ENCODE measurements at regions of chr2 and their contacts with region 1.

Region 1: DNA sequence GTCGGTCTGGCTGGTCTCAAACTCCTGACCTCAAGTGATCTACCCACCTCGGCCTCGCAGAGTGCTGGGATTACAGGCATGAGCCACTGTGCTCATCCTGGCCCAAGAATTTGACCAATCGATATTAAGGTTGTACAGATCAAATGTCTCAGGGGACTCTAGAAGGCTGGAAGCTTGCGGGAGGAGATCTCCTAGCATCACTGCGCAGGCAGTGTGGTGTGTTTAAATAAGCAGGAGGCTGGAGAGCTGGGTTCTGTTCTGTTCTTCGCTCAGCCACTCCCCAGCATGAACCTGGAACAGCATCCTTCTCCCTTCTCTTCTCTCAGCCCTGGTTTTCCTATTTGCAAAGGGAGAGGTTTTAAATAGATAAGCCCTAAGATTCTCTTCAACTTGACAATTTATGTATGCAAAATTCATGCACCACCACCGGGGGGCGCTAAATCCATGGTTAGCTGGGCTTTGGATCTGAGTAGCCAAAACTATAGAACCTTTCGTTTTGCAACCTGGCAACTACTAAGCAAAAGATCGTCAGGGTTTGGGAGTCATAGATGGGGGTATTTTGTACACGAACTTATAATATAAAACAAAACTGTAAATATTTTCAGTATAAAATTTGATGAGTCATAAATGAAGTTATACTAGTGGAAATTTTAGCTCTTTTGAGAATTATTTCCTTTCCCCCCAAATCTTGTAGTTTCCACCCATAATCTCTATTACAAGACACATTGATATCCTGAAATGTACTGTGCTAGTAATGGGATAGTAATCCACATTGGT is 60.6 kb downstream of the SLC16A14 start:
- DNase-seq: peak; percentile 17 to 66
- ATAC-seq: peak; percentile 82 to 88; a peak in 4 of 6 replicates
- H3K4me3 ChIP-seq: no peak overlapping the region
- H3K27ac ChIP-seq: no peak overlapping the region
- H3K4me1 ChIP-seq: no peaks in the 10 kb centered on the region; the same call in 2 of the 3 replicates
- CTCF ChIP-seq: peak; percentile 90
- EP300 ChIP-seq: no peak
- POLR2A ChIP-seq: no peak
- RAD21 ChIP-seq: peak; percentile 86

Region 2: GRCh38 chr2:230018153-230018552 is 10.0 kb after region 1 on chr2:
- CTCF ChIA-PET with region 1: interaction called, 21 read pairs
- POLR2A ChIA-PET with region 1: no interaction called
- DNase-seq: peak in 1 of 2 experiments; percentile 18
- ATAC-seq: peak; percentile 36 to 68; a peak in 3 of 6 replicates
- H3K4me3 ChIP-seq: no peak overlapping the region
- H3K27ac ChIP-seq: no peak overlapping the region
- H3K4me1 ChIP-seq: no peaks in the 10 kb centered on the region
- CTCF ChIP-seq: no peak
- EP300 ChIP-seq: no peak
- POLR2A ChIP-seq: no peak
- RAD21 ChIP-seq: no peak

Region 3: DNA sequence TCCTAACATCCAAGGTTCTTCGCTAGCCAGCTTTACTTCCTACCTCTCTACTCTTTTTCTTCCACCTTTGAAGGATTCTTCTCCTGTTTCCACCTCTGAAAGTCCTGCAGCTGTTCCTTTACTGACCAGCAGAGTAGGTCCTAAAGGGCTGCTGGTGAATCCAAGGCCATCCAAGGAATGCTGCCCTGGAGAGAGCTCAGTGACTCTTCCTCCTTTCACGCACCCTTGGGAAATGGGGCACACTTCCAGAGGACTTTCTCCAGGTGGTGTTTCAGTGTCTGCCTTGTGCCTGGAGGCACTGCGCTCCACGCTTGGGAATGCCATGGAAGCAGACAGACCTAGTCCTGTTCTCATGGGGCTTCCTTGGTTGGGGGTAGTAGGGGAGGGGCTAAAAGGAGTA is 15.2 kb after region 1 on chr2:
- CTCF ChIA-PET with region 1: interaction called, 21 read pairs
- POLR2A ChIA-PET with region 1: no interaction called
- DNase-seq: no peak
- ATAC-seq: peak; percentile 55 to 59; a peak in 4 of 6 replicates
- H3K4me3 ChIP-seq: no peak overlapping the region
- H3K27ac ChIP-seq: no peak overlapping the region
- H3K4me1 ChIP-seq: no peaks in the 10 kb centered on the region
- CTCF ChIP-seq: no peak
- EP300 ChIP-seq: no peak
- POLR2A ChIP-seq: no peak
- RAD21 ChIP-seq: no peak

Region 4: DNA sequence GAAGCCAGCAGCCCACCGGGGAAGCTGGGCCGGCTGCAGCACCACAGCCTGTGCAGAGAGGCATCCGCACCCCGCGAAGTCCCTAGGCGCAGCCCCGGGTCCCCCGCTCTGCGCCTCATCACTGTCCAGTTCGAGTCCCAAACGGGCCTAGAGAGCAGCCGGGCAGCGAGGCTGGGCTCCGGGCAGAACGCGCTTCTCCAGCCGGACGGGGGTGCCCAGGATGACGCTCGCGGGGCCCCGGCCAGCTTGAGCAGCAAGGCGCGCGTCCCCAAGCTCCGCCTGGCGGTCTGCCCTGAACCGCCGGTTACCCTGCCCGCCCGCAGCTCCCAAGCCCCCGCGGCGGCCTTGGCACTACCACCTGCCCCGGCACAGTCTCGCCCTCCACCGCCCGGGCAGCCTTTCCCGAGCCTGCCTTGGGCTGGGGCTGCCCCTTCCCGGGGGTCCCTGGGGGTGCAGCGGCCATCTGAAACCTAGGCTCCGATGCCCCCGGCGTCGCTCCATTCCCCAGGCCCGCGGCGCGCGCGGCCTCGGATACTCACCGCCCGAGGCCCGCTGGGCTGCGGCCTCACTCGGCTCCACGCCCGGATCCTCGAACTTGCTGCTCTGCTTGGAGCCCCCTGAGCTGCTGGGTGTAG is 60.0 kb after region 1 on chr2:
- CTCF ChIA-PET with region 1: interaction called, 41 read pairs
- POLR2A ChIA-PET with region 1: no interaction called
- DNase-seq: peak; percentile 7 to 51
- ATAC-seq: peak; percentile 72 to 77
- H3K4me3 ChIP-seq: peak overlapping the region; percentile 51
- H3K27ac ChIP-seq: peak overlapping the region; percentile 44 to 70; a peak in 5 of 6 replicates
- H3K4me1 ChIP-seq: no peaks in the 10 kb centered on the region
- CTCF ChIP-seq: no peak; the same call in 2 of the 3 replicates
- EP300 ChIP-seq: no peak
- POLR2A ChIP-seq: no peak
- RAD21 ChIP-seq: no peak

Region 5: DNA sequence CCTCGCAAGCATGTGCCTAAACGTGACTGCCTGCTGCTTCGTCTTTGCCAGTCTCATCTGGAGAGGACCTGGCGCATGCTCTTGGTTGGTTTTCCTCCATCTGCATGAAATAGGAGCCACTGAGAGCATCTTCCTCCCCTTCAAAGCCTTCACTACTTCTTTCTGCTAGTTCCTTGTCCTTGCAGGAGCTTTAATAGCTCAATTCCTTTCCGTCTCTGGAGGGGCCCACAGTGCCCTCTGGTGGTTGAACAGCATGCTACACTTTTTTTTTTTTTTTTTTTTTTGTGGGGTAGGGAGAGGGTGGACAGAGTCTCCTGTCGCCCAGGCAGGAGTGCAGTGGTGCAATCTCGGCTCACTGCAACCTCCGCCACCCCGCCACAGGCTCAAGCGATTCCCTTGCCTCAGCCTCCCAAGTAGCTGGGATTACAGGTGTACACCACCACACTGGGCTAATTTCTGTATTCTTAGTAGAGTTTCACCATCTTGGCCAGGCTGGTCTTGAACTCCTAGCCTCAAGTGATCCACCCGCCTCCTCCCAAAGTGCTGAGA is 152.1 kb after region 1 on chr2:
- CTCF ChIA-PET with region 1: interaction called, 98 read pairs
- POLR2A ChIA-PET with region 1: no interaction called
- DNase-seq: peak; percentile 47 to 48
- ATAC-seq: peak; percentile 48 to 88; a peak in 4 of 6 replicates
- H3K4me3 ChIP-seq: no peak overlapping the region
- H3K27ac ChIP-seq: no peak overlapping the region
- H3K4me1 ChIP-seq: no peaks in the 10 kb centered on the region
- CTCF ChIP-seq: peak; percentile 75
- EP300 ChIP-seq: no peak
- POLR2A ChIP-seq: no peak
- RAD21 ChIP-seq: peak; percentile 65 to 71

Region 6: DNA sequence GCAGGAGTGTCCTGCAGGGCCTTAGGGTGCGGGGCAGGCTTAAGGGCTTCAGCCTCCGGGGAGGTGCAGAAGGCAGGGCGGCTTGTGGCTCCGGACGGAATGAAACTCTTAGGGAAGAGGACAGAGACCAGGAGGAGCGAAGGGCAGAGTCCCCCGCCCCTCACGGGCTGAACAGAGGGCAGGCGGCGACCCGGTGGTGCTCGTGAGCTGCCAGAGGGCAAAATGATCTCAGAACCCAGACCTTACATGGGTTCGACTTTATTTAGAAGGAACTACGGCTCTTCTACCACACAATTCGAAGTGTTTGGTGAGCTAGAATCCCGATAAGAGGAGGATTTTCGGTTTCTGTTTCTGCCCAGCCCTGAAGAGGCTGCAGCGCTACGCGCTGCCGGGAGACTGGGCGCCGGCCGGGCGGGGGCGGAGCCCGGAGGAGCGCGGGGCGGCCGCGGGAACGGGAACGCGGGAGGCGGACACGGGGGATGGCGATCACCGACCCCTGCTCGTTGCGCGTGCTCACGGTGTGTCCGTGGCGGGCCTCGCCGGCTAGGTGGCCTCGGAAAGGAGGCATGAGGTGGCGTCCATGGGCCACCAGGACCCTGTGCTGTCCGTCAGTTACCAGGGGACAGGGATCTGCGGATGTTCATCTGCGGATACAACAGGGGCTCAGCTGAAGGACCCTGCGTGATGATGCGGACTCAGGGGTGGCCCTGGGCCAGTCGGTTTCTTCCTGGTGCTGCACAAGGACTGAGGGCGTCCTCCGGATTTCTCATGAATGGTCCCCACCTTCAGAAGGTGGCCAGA is 403.7 kb after region 1 on chr2:
- CTCF ChIA-PET with region 1: no interaction called
- POLR2A ChIA-PET with region 1: no interaction called
- DNase-seq: peak; percentile 30 to 70
- ATAC-seq: peak; percentile 77 to 89
- H3K4me3 ChIP-seq: peak overlapping the region; percentile 64
- H3K27ac ChIP-seq: peak overlapping the region; percentile 64 to 86
- H3K4me1 ChIP-seq: peaks cover 7% of the 10 kb centered on the region; the same call in 2 of the 3 replicates
- CTCF ChIP-seq: no peak
- EP300 ChIP-seq: no peak
- POLR2A ChIP-seq: no peak; the same call in none of the 2 replicates
- RAD21 ChIP-seq: peak in 1 of 2 experiments; percentile 16; a peak in 1 of 5 replicates

Region 7: GRCh38 chr2:230614913-230615332 is 606.8 kb after region 1 on chr2:
- CTCF ChIA-PET with region 1: interaction called, 26 read pairs
- POLR2A ChIA-PET with region 1: no interaction called
- DNase-seq: no peak
- ATAC-seq: no peak
- H3K4me3 ChIP-seq: no peak overlapping the region
- H3K27ac ChIP-seq: peak overlapping the region; percentile 37 to 75; a peak in 4 of 6 replicates
- H3K4me1 ChIP-seq: peaks cover 26% of the 10 kb centered on the region
- CTCF ChIP-seq: no peak
- EP300 ChIP-seq: no peak
- POLR2A ChIP-seq: no peak
- RAD21 ChIP-seq: no peak

Measured in A549 (cell line).